Activated CD8-positive, alpha-beta memory T cell treated with anti-CD3 and anti-CD28 coated beads, Interleukin-2, amount 10 ng/mL, durations not matched to agents 7 days and 5 days (primary cell): ENCODE measurements at regions of chr18 and their contacts with region 1.

Region 1: GRCh38 chr18:63979409-63979920 is 9.6 kb downstream of the SERPINB8 start:
- DNase-seq: peak; percentile 67
- ATAC-seq: peak; percentile 80
- H3K4me3 Mint-ChIP-seq: peak overlapping the region; percentile 47
- H3K27ac Mint-ChIP-seq: peak overlapping the region; percentile 66
- H3K4me1 Mint-ChIP-seq: peaks cover 24% of the 10 kb centered on the region
- H3K27me3 Mint-ChIP-seq: no peaks in the 10 kb centered on the region

Region 2: DNA sequence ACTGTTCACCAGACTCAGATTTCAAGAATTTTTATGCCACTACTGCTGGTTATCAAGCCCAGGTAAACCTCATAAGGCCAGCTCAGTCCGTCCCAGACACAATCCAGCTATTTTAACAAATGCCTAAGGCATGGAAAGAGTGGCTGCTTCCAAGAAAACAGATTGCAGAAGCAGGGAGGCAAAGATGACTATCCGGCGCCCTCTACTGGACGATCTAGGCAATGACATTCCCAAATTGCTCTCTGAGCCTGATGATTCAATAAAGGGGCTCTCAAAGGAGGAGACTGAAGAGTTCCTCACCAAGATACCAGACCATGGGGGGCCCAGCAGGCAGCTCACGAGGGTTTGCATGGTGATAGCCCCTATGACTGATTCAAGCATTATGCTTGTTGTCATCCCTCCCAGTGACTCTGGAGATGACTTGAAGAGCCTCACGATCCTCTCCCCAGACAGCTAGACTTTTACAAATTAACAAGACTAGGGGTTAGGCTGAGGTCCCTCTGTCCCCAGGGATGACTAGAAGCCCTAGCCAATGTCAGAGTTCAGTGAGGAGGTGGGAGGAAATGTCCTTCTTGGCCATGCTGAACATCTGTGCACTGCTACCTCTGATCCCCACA is 15.4 kb after region 1 on chr18:
- CTCF ChIA-PET with region 1: interaction called, 12 read pairs
- DNase-seq: peak; percentile 44
- ATAC-seq: no peak
- H3K4me3 Mint-ChIP-seq: no peak overlapping the region
- H3K27ac Mint-ChIP-seq: no peak overlapping the region
- H3K4me1 Mint-ChIP-seq: peaks cover 1% of the 10 kb centered on the region
- H3K27me3 Mint-ChIP-seq: no peaks in the 10 kb centered on the region